ENCODE measurements at regions of chr4 and their contacts with region 1.

Region 1: GRCh38 chr4:38675146-38676121 is 11.4 kb downstream of the KLF3 start:
- DNase-seq: peak in 1 of 2 donors; percentile 92
- H3K4me3 ChIP-seq: peak overlapping the region in 1 of 2 donors; percentile 51
- H3K27ac ChIP-seq: peak overlapping the region; percentile 91 to 99
- H3K4me1 ChIP-seq: peaks cover 42 to 77% of the 10 kb centered on the region in 2 donors
- H3K27me3 ChIP-seq: no peaks in the 10 kb centered on the region
- CTCF ChIP-seq: peak; percentile 79 to 96 (median 90)

Region 2: DNA sequence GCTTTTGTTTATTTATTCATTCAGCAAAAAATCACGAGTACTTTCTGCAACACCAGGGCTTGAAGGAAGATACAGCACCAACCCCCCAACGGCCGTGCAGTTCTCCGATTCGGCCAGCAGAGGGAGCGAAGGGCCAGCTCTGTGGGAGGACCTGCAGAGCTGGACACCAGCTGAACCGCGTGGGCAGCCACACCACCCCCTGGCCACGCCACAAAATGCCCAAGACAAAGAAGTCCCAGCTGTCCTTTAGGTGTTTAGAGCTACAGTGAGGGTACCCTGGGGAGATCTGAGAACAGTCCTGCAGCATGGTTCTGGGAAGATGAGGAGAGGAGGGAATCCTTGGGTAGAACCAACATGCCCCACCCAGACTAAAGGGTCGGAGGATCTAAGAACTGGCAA is 1072.4 kb before region 1 on chr4:
- intact Hi-C with region 1: no loop called
- DNase-seq: peak; percentile 34 to 87
- H3K4me3 ChIP-seq: no peak overlapping the region
- H3K27ac ChIP-seq: no peak overlapping the region
- H3K4me1 ChIP-seq: no peaks in the 10 kb centered on the region
- H3K27me3 ChIP-seq: no peaks in the 10 kb centered on the region
- CTCF ChIP-seq: peak; percentile 91 to 99 (median 96)

Region 3: GRCh38 chr4:37946503-37947179 is 728.8 kb before region 1 on chr4:
- intact Hi-C with region 1: no loop called
- DNase-seq: no peak
- H3K4me3 ChIP-seq: no peak overlapping the region
- H3K27ac ChIP-seq: no peak overlapping the region
- H3K4me1 ChIP-seq: peaks cover 0 to 2% of the 10 kb centered on the region in 2 donors
- H3K27me3 ChIP-seq: no peaks in the 10 kb centered on the region
- CTCF ChIP-seq: no peak

Region 4: DNA sequence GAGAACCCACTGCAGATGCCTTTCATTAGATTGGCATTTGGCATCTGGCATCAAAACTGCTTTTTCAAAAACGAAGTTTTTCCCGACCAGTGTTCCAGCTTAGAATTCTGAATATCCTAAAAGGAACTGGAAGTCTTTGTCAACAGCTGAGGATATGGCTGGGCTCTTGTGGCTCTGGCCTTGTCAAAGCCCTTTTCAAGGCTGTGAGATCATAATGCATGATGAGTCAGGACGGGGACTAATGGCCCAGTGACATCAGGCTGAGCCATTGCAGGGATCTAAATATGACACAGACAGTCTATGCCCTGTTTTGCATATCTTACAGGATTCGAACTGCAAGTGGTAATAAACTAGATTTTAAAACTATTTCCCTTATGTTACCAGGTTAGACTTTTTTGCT is 408.8 kb before region 1 on chr4:
- intact Hi-C with region 1: loop called (anchors 5 kb)
- DNase-seq: peak; percentile 22 to 72
- H3K4me3 ChIP-seq: no peak overlapping the region
- H3K27ac ChIP-seq: peak overlapping the region in 1 of 2 donors; percentile 16
- H3K4me1 ChIP-seq: no peaks in the 10 kb centered on the region
- H3K27me3 ChIP-seq: no peaks in the 10 kb centered on the region
- CTCF ChIP-seq: no peak

Region 5: GRCh38 chr4:38691251-38692008 is 16.0 kb after region 1 on chr4:
- intact Hi-C with region 1: no loop called
- DNase-seq: peak in 1 of 2 donors; percentile 75
- H3K4me3 ChIP-seq: no peak overlapping the region
- H3K27ac ChIP-seq: peak overlapping the region; percentile 70 to 77
- H3K4me1 ChIP-seq: peaks cover 7 to 20% of the 10 kb centered on the region in 2 donors
- H3K27me3 ChIP-seq: no peaks in the 10 kb centered on the region
- CTCF ChIP-seq: no peak

Measured in ascending aorta (tissue), 2 donors.